ENCODE measurements at regions of chr5 and their contacts with region 1.

Region 1: DNA sequence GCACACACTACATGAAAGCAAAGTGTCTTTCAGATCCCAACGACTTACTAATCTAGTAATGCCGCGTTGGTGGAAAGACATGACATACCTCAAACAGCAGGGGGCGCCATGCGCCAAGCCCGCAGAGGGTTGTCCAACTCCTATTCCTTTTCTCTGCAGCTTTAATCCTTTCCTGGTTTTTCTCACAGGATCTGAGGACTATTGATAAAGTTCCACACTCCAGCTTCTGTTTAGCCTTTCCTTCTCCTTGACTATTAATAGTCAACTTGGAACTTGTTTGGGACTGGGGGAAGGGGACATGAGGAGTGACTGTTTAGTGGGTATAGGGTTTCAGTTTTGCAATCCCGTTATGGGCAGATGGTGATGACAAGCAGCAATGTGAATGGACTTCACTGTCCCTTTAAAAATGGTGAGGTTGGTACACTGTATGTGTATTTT is 62.9 kb downstream of the OTULIN start:
- DNase-seq: peak; percentile 87 to 93
- ATAC-seq: peak; percentile 86
- H3K4me3 ChIP-seq: no peak overlapping the region
- H3K27ac ChIP-seq: no peak overlapping the region
- H3K4me1 ChIP-seq: no peaks in the 10 kb centered on the region
- H3K27me3 ChIP-seq: no peaks in the 10 kb centered on the region

Region 2: DNA sequence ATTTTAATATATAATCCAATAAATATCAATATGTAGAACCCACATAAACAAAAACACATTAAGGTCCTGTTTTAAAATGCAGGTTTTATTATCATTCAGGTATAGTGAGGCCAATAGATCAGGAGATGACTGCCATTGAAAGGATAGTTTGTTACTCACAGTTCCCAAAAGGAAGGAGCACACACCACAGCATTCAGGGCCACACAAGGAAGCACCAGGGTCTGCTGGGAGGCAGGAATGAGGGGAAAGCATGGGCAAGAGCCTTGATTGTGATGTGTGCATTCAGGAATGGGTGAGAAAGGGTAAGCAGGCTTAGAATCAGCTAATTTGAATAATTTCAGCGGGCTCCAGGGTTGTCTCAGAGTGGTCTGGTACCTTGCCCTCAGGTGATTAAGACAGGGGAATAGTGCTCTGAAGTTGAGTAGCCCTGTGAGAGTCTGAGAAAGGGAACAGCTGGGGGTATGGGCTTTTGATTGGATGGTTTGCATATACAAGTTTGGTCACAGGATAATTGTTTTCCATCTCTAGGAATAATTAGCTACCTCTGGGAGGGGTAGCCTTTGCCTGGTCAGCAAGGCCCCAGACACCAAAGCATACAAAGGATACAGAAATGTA is 82.7 kb before region 1 on chr5:
- intact Hi-C with region 1: no loop called
- DNase-seq: no peak
- ATAC-seq: no peak
- H3K4me3 ChIP-seq: no peak overlapping the region
- H3K27ac ChIP-seq: no peak overlapping the region
- H3K4me1 ChIP-seq: no peaks in the 10 kb centered on the region
- H3K27me3 ChIP-seq: no peaks in the 10 kb centered on the region

Region 3: GRCh38 chr5:14685757-14686156 is 41.7 kb before region 1 on chr5:
- intact Hi-C with region 1: loop called in 1 of 2 experiments (anchors 5 kb)
- DNase-seq: no peak
- ATAC-seq: peak; percentile 65
- H3K4me3 ChIP-seq: no peak overlapping the region
- H3K27ac ChIP-seq: no peak overlapping the region
- H3K4me1 ChIP-seq: peaks cover 1 to 3% of the 10 kb centered on the region in 2 donors
- H3K27me3 ChIP-seq: no peaks in the 10 kb centered on the region

Region 4: GRCh38 chr5:14816999-14817761 is 89.7 kb after region 1 on chr5:
- intact Hi-C with region 1: no loop called
- DNase-seq: peak in 1 of 2 donors; percentile 80
- ATAC-seq: peak; percentile 75
- H3K4me3 ChIP-seq: no peak overlapping the region
- H3K27ac ChIP-seq: peak overlapping the region in 1 of 2 donors; percentile 49
- H3K4me1 ChIP-seq: peaks cover 3 to 13% of the 10 kb centered on the region in 2 donors
- H3K27me3 ChIP-seq: no peaks in the 10 kb centered on the region

Region 5: GRCh38 chr5:15003511-15003920 is 276.1 kb after region 1 on chr5:
- intact Hi-C with region 1: loop called (anchors 2 kb)
- DNase-seq: peak in 1 of 2 donors; percentile 58
- ATAC-seq: peak; percentile 79
- H3K4me3 ChIP-seq: no peak overlapping the region
- H3K27ac ChIP-seq: no peak overlapping the region
- H3K4me1 ChIP-seq: peaks cover 0 to 2% of the 10 kb centered on the region in 2 donors
- H3K27me3 ChIP-seq: no peaks in the 10 kb centered on the region